ENCODE measurements at regions of chr20 and their contacts with region 1.

Region 1: DNA sequence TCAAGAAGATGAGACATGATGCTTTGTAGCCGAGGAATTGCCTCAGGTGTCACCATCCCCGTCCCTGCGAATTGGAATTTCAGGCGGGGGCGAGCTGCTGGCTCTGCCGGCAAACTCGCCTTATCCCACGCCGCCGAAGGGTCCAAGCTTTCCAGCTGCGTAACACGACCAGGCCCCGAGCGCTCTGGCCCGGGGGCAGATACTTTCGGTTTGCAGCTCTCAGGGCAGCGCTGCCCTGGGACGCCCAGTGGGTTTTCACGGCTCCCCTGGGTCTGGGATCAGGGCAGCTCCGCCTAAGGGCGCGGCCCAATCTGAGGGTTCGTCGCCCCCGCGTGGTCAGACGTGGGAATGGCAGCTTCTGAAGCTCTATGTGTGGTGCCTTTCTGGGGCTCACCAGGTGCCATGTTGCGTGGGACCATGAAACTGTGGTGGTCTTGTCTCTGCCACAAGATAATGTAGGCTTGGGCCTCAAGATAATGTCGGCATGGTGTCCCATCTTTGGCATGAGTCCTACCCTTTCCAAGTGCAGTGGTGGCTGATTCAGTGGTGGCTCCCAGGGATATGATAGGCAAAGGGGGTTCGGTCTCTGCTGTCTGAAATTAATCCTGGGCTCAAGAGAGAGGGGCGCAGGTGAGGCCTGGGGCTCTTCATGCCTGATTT is 20.9 kb downstream of the PIGT start:
- DNase-seq: peak; percentile 69
- ATAC-seq: peak; percentile 100
- H3K4me3 ChIP-seq: peak overlapping the region; percentile 55 to 68
- H3K27ac ChIP-seq: peak overlapping the region; percentile 55
- H3K4me1 ChIP-seq: peaks cover 4% of the 10 kb centered on the region; the same call in 1 of the 2 replicates
- H3K27me3 ChIP-seq: no peaks in the 10 kb centered on the region
- CTCF ChIP-seq: peak; percentile 95

Region 2: GRCh38 chr20:45322952-45323383 is 113.9 kb before region 1 on chr20:
- CTCF ChIA-PET with region 1: interaction called, 7 read pairs
- POLR2A ChIA-PET with region 1: no interaction called
- in situ Hi-C with region 1: no loop called
- intact Hi-C with region 1: loop called (anchors 5 kb)
- DNase-seq: no peak
- ATAC-seq: peak; percentile 61
- H3K4me3 ChIP-seq: no peak overlapping the region
- H3K27ac ChIP-seq: no peak overlapping the region
- H3K4me1 ChIP-seq: peaks cover 10% of the 10 kb centered on the region
- H3K27me3 ChIP-seq: no peaks in the 10 kb centered on the region
- CTCF ChIP-seq: peak; percentile 74

Region 3: DNA sequence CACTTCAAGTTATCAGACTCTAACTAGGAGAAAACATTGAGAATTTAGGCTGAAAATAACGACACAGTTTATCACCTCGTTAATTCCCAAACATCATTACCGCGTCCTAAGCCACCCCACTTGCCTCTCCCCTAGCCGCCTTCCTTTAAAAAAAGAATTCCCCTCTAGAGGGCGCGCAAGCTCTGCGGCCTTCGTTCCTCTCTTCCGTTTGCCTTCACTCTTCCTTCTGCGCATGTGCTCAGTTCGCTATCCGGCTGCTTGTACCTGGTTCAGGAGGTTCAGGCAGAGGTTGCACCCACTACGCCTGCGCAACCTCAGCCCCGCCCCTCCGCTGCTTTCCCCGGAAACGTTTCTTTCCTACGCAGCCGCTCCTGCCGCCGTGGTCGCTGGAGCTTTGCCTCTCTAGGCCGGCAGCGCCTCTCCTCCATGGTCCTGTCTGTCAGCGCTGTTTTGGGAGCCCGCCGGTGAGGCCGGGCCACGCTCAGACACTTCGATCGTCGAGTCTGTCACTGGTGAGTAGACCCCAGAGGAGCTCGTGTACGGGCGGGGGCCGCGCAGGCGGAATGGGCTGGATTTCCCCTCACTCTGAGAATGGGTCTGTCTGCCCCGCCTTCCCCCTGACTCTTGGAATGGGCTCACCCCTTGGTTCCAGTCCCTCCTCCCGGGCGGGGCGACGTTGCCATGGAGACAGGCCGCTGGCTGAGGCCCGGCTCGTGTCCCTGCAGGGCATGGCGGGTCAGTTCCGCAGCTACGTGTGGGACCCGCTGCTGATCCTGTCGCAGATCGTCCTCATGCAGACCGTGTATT is 73.9 kb before region 1 on chr20 and contains the start of gene SYS1:
- CTCF ChIA-PET with region 1: interaction called, 15 read pairs
- POLR2A ChIA-PET with region 1: no interaction called
- in situ Hi-C with region 1: no loop called
- intact Hi-C with region 1: loop called (anchors 2 kb)
- DNase-seq: peak; percentile 95
- ATAC-seq: peak; percentile 94
- H3K4me3 ChIP-seq: peak within 1 kb of the TSS; percentile 80 to 83
- H3K27ac ChIP-seq: peak within 1 kb of the TSS; percentile 93
- H3K4me1 ChIP-seq: peaks cover 27% of the 10 kb centered on the region
- H3K27me3 ChIP-seq: no peaks in the 10 kb centered on the region
- CTCF ChIP-seq: peak; percentile 98
- total RNA-seq, gene SYS1: 29.1 TPM

Region 4: GRCh38 chr20:45373353-45374100 is 63.3 kb before region 1 on chr20:
- CTCF ChIA-PET with region 1: interaction called, 47 read pairs
- POLR2A ChIA-PET with region 1: interaction called, 8 read pairs
- in situ Hi-C with region 1: no loop called
- intact Hi-C with region 1: loop called (anchors 2 kb)
- DNase-seq: peak; percentile 75
- ATAC-seq: peak; percentile 94
- H3K4me3 ChIP-seq: peak overlapping the region; percentile 46 to 75
- H3K27ac ChIP-seq: peak overlapping the region; percentile 59; the same call in 1 of the 2 replicates
- H3K4me1 ChIP-seq: peaks cover 6% of the 10 kb centered on the region; the same call in 1 of the 2 replicates
- H3K27me3 ChIP-seq: no peaks in the 10 kb centered on the region
- CTCF ChIP-seq: peak; percentile 97

Region 5: GRCh38 chr20:45383131-45383530 is 53.7 kb before region 1 on chr20:
- CTCF ChIA-PET with region 1: interaction called, 11 read pairs
- POLR2A ChIA-PET with region 1: interaction called, 8 read pairs
- in situ Hi-C with region 1: no loop called
- intact Hi-C with region 1: no loop called
- DNase-seq: no peak
- ATAC-seq: peak; percentile 73
- H3K4me3 ChIP-seq: no peak overlapping the region
- H3K27ac ChIP-seq: no peak overlapping the region
- H3K4me1 ChIP-seq: no peaks in the 10 kb centered on the region
- H3K27me3 ChIP-seq: no peaks in the 10 kb centered on the region
- CTCF ChIP-seq: no peak

Measured in Panc1 (cell line).